A549 (cell line): ENCODE measurements at regions of chr15 and their contacts with region 1.

Region 1: GRCh38 chr15:29103824-29104565 is 165.6 kb downstream of the NSMCE3 start:
- DNase-seq: peak; percentile 70
- ATAC-seq: peak; percentile 85 to 95
- H3K4me3 ChIP-seq: no peak overlapping the region
- H3K27ac ChIP-seq: 0 out of 6 replicates have a peak overlapping the region, but pooled peaks of 1 of the 2 experiments have one; percentile 20
- H3K4me1 ChIP-seq: no peaks in the 10 kb centered on the region
- CTCF ChIP-seq: peak; percentile 88
- EP300 ChIP-seq: no peak
- POLR2A ChIP-seq: no peak
- RAD21 ChIP-seq: peak; percentile 73 to 85

Region 2: DNA sequence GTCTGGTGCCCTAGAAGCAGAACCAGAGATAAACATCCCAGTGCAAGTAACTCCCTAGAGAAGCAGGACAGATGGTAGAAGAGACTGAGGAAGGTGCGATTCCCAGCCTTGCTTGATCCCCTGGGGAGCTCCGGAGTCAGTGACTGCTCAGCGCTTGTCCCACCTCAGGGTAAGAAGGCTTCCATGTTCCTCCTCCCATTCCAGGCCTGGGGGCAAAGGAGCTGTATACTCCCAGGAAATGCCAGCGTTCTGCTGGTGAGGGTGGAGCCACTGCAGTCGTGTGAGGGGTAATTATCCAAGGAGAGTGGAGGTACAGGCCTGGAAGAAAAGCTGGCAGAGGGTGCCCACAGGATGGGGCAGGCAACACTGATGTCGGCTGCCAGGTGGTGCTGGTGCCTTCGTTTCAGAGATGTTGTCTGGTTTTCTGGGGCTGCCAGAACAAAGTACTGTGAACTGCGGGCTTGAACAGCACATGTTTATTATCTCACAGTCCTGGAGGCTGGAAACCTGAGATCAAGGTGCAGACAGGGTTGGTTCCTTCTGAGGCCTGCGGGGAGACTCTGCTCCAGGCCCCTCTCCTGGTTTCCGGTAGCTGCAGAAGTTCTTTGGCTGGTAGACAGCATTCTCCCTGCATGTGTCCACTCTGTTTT is 230.3 kb before region 1 on chr15:
- CTCF ChIA-PET with region 1: interaction called, 11 read pairs
- POLR2A ChIA-PET with region 1: no interaction called
- DNase-seq: no peak
- ATAC-seq: peak; percentile 41 to 48; a peak in 3 of 6 replicates
- H3K4me3 ChIP-seq: no peak overlapping the region
- H3K27ac ChIP-seq: no peak overlapping the region
- H3K4me1 ChIP-seq: no peaks in the 10 kb centered on the region
- CTCF ChIP-seq: no peak
- EP300 ChIP-seq: no peak
- POLR2A ChIP-seq: no peak
- RAD21 ChIP-seq: no peak

Region 3: GRCh38 chr15:28913171-28913765 is 190.7 kb before region 1 on chr15:
- CTCF ChIA-PET with region 1: interaction called, 17 read pairs
- POLR2A ChIA-PET with region 1: no interaction called
- DNase-seq: peak; percentile 24 to 38
- ATAC-seq: peak; percentile 41 to 78; a peak in 4 of 6 replicates
- H3K4me3 ChIP-seq: no peak overlapping the region
- H3K27ac ChIP-seq: no peak overlapping the region
- H3K4me1 ChIP-seq: 0 out of 3 replicates have a peak, but pooled peaks cover 3% of the 10 kb centered on the region
- CTCF ChIP-seq: no peak
- EP300 ChIP-seq: no peak
- POLR2A ChIP-seq: no peak
- RAD21 ChIP-seq: 0 out of 5 replicates have a peak, but pooled peaks of 1 of the 2 experiments have one; percentile 8

Region 4: DNA sequence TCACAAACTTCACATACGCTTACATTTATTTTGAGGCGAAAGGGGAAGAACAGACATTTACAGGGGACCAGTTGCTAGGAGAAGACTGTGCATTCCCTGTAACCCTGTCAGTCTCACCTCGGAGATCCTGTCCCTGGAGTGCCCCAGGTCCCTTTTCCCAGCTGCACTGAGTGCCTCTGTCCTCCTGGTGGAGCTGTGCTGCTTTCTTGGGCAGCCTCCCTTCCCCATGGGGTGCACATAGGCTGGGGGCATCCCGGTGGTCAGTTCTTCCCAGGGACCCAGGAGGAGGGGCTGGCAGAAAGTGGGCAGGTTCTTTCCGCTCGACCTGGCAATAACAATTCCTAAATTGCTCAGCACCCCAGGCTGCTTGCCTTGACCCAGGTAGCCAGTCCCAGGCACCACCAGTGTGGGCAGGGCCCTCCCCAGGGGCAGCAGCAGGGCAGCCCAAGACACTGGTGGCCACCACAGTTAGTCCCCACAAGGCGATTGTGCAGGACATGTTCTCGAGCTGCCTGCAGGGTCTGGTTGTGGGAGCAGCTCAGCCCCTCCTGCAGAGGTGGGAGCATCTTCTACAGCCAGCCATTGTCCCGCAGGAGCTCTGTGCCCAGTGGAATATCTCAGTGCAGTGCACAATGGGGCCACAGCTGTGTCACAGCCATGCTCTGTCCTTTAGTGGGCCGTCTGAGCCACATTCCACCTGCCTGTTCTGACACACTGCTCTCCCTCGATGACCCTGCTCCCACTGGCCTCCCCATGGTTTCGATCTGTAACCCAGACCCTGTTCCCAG is 181.9 kb before region 1 on chr15:
- CTCF ChIA-PET with region 1: interaction called, 13 read pairs
- POLR2A ChIA-PET with region 1: no interaction called
- DNase-seq: no peak
- ATAC-seq: peak in 1 of 2 experiments; percentile 36; a peak in 2 of 6 replicates
- H3K4me3 ChIP-seq: no peak overlapping the region
- H3K27ac ChIP-seq: no peak overlapping the region
- H3K4me1 ChIP-seq: peaks cover 9% of the 10 kb centered on the region
- CTCF ChIP-seq: no peak
- EP300 ChIP-seq: no peak
- POLR2A ChIP-seq: no peak
- RAD21 ChIP-seq: peak in 1 of 2 experiments; percentile 33; a peak in 2 of 5 replicates

Region 5: GRCh38 chr15:29090617-29091466 is 13.2 kb before region 1 on chr15:
- CTCF ChIA-PET with region 1: interaction called, 228 read pairs
- POLR2A ChIA-PET with region 1: no interaction called
- DNase-seq: peak; percentile 41 to 52
- ATAC-seq: peak; percentile 14 to 85; a peak in 4 of 6 replicates
- H3K4me3 ChIP-seq: no peak overlapping the region
- H3K27ac ChIP-seq: no peak overlapping the region
- H3K4me1 ChIP-seq: no peaks in the 10 kb centered on the region
- CTCF ChIP-seq: peak; percentile 60
- EP300 ChIP-seq: no peak
- POLR2A ChIP-seq: no peak
- RAD21 ChIP-seq: peak; percentile 51 to 54

Region 6: DNA sequence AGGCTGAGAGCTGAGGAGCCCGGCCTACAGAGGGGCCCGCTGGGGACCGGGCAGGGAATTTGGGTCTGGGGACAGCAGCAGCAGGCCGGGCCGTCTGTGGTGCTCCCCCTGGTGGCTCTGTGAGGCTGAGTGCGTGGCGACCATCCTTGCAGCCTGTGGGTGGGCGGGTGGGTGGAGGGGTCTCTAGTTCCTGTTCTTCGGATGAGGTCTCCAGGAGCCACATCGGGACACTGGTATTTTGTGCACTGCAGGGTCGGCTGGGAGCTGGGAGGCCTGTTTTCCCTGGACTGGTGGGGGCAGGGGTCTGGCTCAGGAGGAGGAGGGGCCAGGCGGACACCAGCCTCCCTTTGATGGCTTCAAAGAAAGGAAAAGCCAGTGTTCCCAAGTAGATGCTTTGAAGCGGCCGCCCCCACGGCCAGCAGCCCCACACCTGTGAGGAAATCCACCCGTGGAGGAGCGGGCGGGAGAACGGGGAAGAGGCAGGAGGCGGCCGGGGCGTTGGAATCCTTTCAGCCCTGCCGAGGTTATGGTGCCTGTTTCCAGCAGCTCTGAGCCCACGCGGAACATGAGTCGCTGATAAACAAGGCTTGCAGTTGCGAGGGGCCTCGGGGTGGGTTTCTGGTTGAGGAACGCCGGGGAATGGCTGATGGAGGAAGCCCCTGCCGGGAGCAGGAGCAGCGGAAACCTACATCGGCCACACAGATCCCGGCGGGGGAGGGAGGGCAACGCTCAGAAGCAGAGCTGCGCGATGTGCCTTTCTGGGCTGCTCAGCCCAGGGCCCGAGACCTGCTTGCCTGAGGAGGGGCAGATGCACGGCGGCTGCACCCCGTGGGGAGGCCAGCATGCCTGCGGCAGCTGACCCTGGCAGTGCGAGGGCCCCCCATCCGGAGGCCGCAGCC is 11.3 kb after region 1 on chr15:
- CTCF ChIA-PET with region 1: interaction called, 116 read pairs
- POLR2A ChIA-PET with region 1: no interaction called
- DNase-seq: peak in 1 of 2 experiments; percentile 20
- ATAC-seq: peak in 1 of 2 experiments; percentile 58; a peak in 3 of 6 replicates
- H3K4me3 ChIP-seq: no peak overlapping the region
- H3K27ac ChIP-seq: no peak overlapping the region
- H3K4me1 ChIP-seq: no peaks in the 10 kb centered on the region
- CTCF ChIP-seq: peak; percentile 34; the same call in 2 of the 3 replicates
- EP300 ChIP-seq: no peak
- POLR2A ChIP-seq: no peak
- RAD21 ChIP-seq: no peak

Region 7: DNA sequence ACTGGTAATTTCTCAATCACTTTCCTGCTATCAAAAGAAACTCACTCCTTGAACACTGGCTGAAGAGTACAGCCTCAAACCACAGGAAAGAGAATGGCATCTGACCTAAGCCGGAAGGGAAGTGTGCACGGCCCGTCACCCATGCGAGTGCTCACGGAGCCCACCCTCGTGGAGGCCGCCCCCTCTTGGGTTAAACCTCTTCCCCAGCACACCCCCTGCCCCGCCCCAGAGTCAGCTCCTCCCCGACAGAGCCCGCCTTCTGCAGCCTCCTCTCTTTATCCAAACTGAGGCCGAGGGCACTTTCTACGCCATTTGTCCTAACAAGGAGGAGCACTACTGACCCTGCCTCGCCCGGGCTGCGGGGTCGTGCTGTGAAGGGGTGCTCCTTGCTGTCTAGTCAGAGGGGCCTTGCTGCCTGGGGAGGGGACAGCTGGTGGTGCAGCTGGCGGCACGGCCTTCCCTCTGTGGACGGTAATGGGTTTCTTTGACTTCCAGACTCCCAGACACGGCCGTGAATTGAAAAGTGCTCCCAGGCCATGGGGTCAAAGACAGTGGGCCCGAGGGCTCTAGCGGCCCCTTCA is 27.9 kb after region 1 on chr15:
- CTCF ChIA-PET with region 1: interaction called, 116 read pairs
- POLR2A ChIA-PET with region 1: no interaction called
- DNase-seq: no peak
- ATAC-seq: no peak
- H3K4me3 ChIP-seq: no peak overlapping the region
- H3K27ac ChIP-seq: no peak overlapping the region
- H3K4me1 ChIP-seq: no peaks in the 10 kb centered on the region
- CTCF ChIP-seq: no peak
- EP300 ChIP-seq: no peak
- POLR2A ChIP-seq: no peak
- RAD21 ChIP-seq: no peak

Region 8: DNA sequence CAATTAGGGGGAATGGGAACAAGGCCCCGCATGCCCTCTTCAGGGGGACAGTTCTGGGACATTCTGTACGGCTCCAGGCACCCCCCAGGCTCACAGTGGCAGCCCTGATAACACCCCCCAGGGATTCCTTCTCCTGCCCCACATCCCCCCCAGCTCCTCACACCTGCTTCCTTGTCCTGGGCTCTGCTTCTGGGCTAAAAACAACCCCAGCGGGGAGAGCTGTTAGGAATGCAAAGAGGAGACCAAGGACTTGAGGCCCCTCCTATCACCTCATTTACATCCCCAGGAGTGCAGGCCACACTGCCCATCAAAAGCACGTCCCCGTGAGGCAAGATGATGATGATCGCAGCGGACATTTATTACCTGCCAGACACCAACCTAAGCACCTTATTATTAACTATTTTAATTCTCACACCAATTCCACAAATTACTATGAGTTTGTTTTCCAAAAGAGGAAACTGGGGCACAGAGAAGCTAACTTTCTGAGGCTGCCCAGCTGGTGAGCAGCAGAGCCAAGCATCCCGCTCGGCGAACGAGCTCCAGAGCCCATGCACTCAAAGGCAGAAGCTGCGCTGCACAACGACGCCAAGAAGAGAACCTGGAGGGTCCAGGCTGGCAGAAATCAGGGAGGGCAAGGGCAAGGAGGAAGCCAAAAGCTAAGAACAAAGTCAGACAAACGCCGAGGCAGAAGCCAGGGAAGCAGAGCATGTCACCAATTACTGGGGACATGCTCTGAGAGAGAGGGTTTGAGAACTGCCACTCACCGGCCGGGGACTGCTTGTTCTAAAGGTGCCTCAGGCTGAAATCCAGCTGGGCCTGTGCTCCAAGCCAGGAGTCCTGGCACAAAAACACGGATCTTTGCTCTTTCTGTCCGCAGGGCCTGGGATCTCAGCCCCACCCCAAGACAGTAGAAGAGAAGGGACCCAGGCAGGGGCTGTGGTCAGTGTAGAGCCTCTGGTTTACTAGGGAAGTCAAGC is 241.8 kb after region 1 on chr15:
- CTCF ChIA-PET with region 1: no interaction called
- POLR2A ChIA-PET with region 1: no interaction called
- DNase-seq: no peak
- ATAC-seq: no peak
- H3K4me3 ChIP-seq: no peak overlapping the region
- H3K27ac ChIP-seq: no peak overlapping the region
- H3K4me1 ChIP-seq: no peaks in the 10 kb centered on the region
- CTCF ChIP-seq: no peak
- EP300 ChIP-seq: no peak
- POLR2A ChIP-seq: no peak
- RAD21 ChIP-seq: no peak